CD4-positive, alpha-beta T cell (primary cell): ENCODE measurements at regions of chr2 and their contacts with region 1.

Region 1: DNA sequence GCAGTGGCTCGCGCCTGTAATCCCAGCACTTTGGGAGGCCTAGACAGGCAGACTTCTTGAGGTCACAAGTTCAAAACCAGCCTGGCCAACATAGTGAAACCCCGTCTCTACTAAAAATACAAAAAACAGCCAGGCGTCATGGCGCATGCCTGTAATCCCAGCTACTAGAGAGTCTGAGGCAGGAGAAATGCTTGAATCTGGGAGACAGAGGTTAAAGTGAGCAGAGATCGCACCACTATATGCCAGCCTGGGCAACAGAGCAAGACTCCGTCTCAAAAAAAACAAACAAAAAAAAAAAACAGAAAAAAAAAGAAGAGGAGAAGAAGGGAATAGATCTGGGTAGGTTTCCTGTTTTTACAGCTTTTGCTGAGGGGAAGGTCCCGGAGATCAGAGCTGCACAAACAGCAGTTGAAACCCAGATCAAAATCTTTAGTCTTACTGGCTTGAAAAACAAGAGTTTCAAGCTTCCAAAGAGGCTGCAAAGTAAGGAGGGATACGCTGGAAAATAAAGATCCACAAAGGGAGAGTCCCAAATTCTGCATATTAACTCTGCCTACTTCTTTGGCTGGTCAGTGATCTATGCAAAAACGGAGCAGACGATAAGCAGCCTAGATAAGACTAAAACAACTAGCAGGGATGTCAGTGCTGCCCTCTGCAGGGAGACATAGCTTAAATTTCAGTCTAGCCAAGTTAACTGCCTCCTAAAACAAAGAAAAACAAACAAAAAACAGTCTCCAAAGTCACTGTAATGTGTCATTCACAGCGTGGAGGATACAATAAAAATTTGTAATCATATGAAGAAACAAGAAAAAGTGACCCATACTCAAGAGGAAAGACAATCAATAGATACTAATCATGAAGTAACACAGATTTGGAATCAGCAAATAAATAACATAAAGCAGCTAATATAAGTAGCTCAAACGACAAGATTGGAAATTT is 74.1 kb downstream of the TLK1 start:
- DNase-seq: peak; percentile 20 to 82 (median 56)
- ATAC-seq: peak; percentile 64
- H3K4me3 ChIP-seq: peak overlapping the region; percentile 44
- H3K4me3 Mint-ChIP-seq: peak overlapping the region; percentile 84
- H3K27ac ChIP-seq: peak overlapping the region; percentile 31 to 64
- H3K27ac Mint-ChIP-seq: peak overlapping the region; percentile 88
- H3K4me1 ChIP-seq: peaks cover 19% of the 10 kb centered on the region
- H3K4me1 Mint-ChIP-seq: peaks cover 81% of the 10 kb centered on the region
- H3K27me3 ChIP-seq: no peaks in the 10 kb centered on the region
- H3K27me3 Mint-ChIP-seq: no peaks in the 10 kb centered on the region
- CTCF ChIP-seq: peak; percentile 83

Region 2: GRCh38 chr2:171034315-171034714 is 52.3 kb before region 1 on chr2:
- CTCF ChIA-PET with region 1: interaction called, 3 read pairs
- POLR2A ChIA-PET with region 1: no interaction called
- intact Hi-C with region 1: loop called in 1 of 2 experiments (anchors 2 kb)
- DNase-seq: no peak
- ATAC-seq: no peak
- H3K4me3 ChIP-seq: no peak overlapping the region
- H3K4me3 Mint-ChIP-seq: no peak overlapping the region
- H3K27ac ChIP-seq: no peak overlapping the region
- H3K27ac Mint-ChIP-seq: peak overlapping the region; percentile 8
- H3K4me1 ChIP-seq: no peaks in the 10 kb centered on the region
- H3K4me1 Mint-ChIP-seq: peaks cover 15% of the 10 kb centered on the region
- H3K27me3 ChIP-seq: no peaks in the 10 kb centered on the region
- H3K27me3 Mint-ChIP-seq: no peaks in the 10 kb centered on the region
- CTCF ChIP-seq: no peak

Region 3: GRCh38 chr2:171049691-171050090 is 36.9 kb before region 1 on chr2:
- CTCF ChIA-PET with region 1: interaction called, 3 read pairs
- POLR2A ChIA-PET with region 1: interaction called, 4 read pairs
- intact Hi-C with region 1: loop called (anchors 5 kb)
- DNase-seq: no peak
- ATAC-seq: no peak
- H3K4me3 ChIP-seq: no peak overlapping the region
- H3K4me3 Mint-ChIP-seq: no peak overlapping the region
- H3K27ac ChIP-seq: no peak overlapping the region
- H3K27ac Mint-ChIP-seq: no peak overlapping the region
- H3K4me1 ChIP-seq: no peaks in the 10 kb centered on the region
- H3K4me1 Mint-ChIP-seq: peaks cover 4% of the 10 kb centered on the region
- H3K27me3 ChIP-seq: no peaks in the 10 kb centered on the region
- H3K27me3 Mint-ChIP-seq: no peaks in the 10 kb centered on the region
- CTCF ChIP-seq: no peak

Region 4: GRCh38 chr2:171124541-171124940 is 37.9 kb after region 1 on chr2:
- CTCF ChIA-PET with region 1: no interaction called
- POLR2A ChIA-PET with region 1: no interaction called
- intact Hi-C with region 1: loop called in 1 of 2 experiments (anchors 5 kb)
- DNase-seq: no peak
- ATAC-seq: no peak
- H3K4me3 ChIP-seq: no peak overlapping the region
- H3K4me3 Mint-ChIP-seq: no peak overlapping the region
- H3K27ac ChIP-seq: no peak overlapping the region
- H3K27ac Mint-ChIP-seq: peak overlapping the region; percentile 4
- H3K4me1 ChIP-seq: peaks cover 13% of the 10 kb centered on the region
- H3K4me1 Mint-ChIP-seq: peaks cover 83% of the 10 kb centered on the region
- H3K27me3 ChIP-seq: no peaks in the 10 kb centered on the region
- H3K27me3 Mint-ChIP-seq: no peaks in the 10 kb centered on the region
- CTCF ChIP-seq: no peak

Region 5: DNA sequence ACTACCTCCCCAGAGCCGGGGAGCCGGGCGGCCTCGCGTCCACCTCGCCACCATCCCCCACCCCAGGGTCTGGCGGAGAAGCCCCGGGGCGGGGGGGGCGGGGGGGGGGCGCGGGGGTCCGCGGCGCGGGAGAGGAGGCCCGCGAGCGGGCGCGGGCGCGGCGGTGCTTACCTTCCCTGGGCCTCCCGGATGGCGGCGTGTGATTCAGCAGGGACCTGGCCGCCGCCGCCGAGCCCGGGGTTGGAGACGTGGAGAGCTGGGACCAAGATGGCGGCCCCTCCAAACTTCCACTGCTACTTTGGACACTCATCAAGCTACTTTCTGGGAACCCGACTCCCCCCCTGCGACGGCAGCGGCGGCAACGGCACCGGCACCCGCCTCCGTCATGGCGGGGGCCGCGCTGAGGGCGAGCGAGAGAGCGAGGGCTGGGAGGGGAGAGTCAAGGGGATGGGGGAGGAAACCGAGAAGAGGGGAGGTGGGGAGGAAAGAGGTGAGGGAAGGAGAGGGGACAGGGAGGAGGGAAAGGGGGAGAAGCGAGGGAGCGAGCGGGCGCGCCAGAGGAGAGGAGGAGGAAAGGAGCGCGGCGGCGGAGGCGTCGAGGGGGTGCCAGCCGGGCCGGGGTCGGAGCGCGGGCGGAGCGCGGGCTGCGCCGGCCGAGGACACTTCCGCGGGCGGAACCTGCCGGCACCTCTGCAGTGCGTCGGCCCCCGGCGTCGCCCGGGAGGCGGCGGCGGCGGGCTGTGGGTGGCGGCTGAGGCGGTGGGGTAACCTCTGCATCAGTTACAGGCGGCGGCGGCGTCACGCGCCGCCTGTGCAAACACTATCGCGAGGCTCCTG is 73.7 kb after region 1 on chr2 and contains the start of gene TLK1:
- CTCF ChIA-PET with region 1: interaction called, 18 read pairs
- POLR2A ChIA-PET with region 1: interaction called, 43 read pairs
- intact Hi-C with region 1: loop called (anchors 1 to 2 kb)
- DNase-seq: peak; percentile 52 to 91 (median 78)
- ATAC-seq: peak; percentile 65
- H3K4me3 ChIP-seq: peak within 1 kb of the TSS; percentile 86
- H3K4me3 Mint-ChIP-seq: peak within 1 kb of the TSS; percentile 96
- H3K27ac ChIP-seq: peak within 1 kb of the TSS; percentile 62 to 95
- H3K27ac Mint-ChIP-seq: peak within 1 kb of the TSS; percentile 95
- H3K4me1 ChIP-seq: peaks cover 30% of the 10 kb centered on the region
- H3K4me1 Mint-ChIP-seq: peaks cover 76% of the 10 kb centered on the region
- H3K27me3 ChIP-seq: no peaks in the 10 kb centered on the region
- H3K27me3 Mint-ChIP-seq: no peaks in the 10 kb centered on the region
- CTCF ChIP-seq: no peak
- total RNA-seq, gene TLK1: 135 to 138 TPM

Region 6: DNA sequence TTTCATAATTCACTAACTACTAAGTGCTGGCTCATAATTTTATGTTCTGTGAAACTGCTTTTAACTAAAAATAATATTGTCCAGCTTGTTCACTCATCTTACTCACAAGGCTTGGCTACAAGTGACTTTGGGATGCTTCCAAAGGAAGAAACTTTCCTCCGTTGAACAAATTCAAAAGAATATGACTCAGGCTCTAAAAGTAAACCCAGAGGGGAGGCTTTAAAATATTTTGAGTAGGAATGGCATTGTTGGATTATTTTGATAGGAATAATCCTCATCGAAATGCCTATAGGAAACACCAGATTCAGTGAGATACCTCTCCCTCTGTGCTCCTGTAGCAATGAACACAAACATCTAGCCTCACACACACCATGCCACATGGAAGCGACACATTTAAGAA is 99.3 kb after region 1 on chr2:
- CTCF ChIA-PET with region 1: no interaction called
- POLR2A ChIA-PET with region 1: no interaction called
- intact Hi-C with region 1: no loop called
- DNase-seq: no peak
- ATAC-seq: no peak
- H3K4me3 ChIP-seq: no peak overlapping the region
- H3K4me3 Mint-ChIP-seq: no peak overlapping the region
- H3K27ac ChIP-seq: no peak overlapping the region
- H3K27ac Mint-ChIP-seq: no peak overlapping the region
- H3K4me1 ChIP-seq: no peaks in the 10 kb centered on the region
- H3K4me1 Mint-ChIP-seq: no peaks in the 10 kb centered on the region
- H3K27me3 ChIP-seq: no peaks in the 10 kb centered on the region
- H3K27me3 Mint-ChIP-seq: no peaks in the 10 kb centered on the region
- CTCF ChIP-seq: no peak

Region 7: GRCh38 chr2:171433763-171434670 is 347.4 kb after region 1 on chr2 and contains the starts of genes DCAF17 and METTL8:
- CTCF ChIA-PET with region 1: no interaction called
- POLR2A ChIA-PET with region 1: interaction called, 3 read pairs
- intact Hi-C with region 1: loop called in 1 of 2 experiments (anchors 2 kb)
- DNase-seq: peak; percentile 84 to 97 (median 92)
- ATAC-seq: peak; percentile 91
- H3K4me3 ChIP-seq: peak within 1 kb of the TSS; percentile 65
- H3K4me3 Mint-ChIP-seq: peak within 1 kb of the TSS; percentile 94
- H3K27ac ChIP-seq: peak within 1 kb of the TSS; percentile 93 to 96
- H3K27ac Mint-ChIP-seq: peak within 1 kb of the TSS; percentile 88
- H3K4me1 ChIP-seq: peaks cover 10% of the 10 kb centered on the region
- H3K4me1 Mint-ChIP-seq: peaks cover 62% of the 10 kb centered on the region
- H3K27me3 ChIP-seq: no peaks in the 10 kb centered on the region
- H3K27me3 Mint-ChIP-seq: no peaks in the 10 kb centered on the region
- CTCF ChIP-seq: peak; percentile 59
- total RNA-seq, gene DCAF17: 13.0 to 14.3 TPM
- total RNA-seq, gene METTL8: 9.7 to 11.5 TPM

Region 8: GRCh38 chr2:171460537-171460936 is 373.9 kb after region 1 on chr2:
- CTCF ChIA-PET with region 1: no interaction called
- POLR2A ChIA-PET with region 1: no interaction called
- intact Hi-C with region 1: no loop called
- DNase-seq: no peak
- ATAC-seq: no peak
- H3K4me3 ChIP-seq: no peak overlapping the region
- H3K4me3 Mint-ChIP-seq: no peak overlapping the region
- H3K27ac ChIP-seq: no peak overlapping the region
- H3K27ac Mint-ChIP-seq: no peak overlapping the region
- H3K4me1 ChIP-seq: no peaks in the 10 kb centered on the region
- H3K4me1 Mint-ChIP-seq: peaks cover 3% of the 10 kb centered on the region
- H3K27me3 ChIP-seq: no peaks in the 10 kb centered on the region
- H3K27me3 Mint-ChIP-seq: no peaks in the 10 kb centered on the region
- CTCF ChIP-seq: no peak